ENCODE measurements at regions of chr18 and their contacts with region 1.

Region 1: DNA sequence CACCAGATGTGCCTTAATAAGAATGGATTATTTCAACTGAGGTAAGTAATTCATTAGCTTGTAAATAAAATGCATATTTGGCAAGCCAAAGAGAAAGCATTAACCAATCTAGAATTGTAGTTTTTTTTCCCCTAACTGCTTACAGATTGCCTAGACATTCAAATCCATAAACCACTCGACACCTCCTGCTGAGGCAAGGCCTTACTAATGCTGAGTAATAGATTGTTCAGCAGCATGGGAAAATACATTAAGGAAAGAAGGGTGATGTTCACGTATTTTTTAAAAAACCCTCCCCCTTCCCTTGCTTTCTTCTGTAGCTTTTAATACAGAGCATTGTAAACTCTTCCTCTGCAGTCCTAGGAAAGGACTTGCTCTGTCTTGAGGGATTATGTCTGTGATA is 17.0 kb upstream of the LINC00305 start:
- DNase-seq: no peak
- H3K4me3 ChIP-seq: no peak overlapping the region
- H3K27ac ChIP-seq: no peak overlapping the region
- H3K27me3 ChIP-seq: peaks cover 0 to 5% (median 0%) of the 10 kb centered on the region in 45 donors
- CTCF ChIP-seq: no peak

Region 2: DNA sequence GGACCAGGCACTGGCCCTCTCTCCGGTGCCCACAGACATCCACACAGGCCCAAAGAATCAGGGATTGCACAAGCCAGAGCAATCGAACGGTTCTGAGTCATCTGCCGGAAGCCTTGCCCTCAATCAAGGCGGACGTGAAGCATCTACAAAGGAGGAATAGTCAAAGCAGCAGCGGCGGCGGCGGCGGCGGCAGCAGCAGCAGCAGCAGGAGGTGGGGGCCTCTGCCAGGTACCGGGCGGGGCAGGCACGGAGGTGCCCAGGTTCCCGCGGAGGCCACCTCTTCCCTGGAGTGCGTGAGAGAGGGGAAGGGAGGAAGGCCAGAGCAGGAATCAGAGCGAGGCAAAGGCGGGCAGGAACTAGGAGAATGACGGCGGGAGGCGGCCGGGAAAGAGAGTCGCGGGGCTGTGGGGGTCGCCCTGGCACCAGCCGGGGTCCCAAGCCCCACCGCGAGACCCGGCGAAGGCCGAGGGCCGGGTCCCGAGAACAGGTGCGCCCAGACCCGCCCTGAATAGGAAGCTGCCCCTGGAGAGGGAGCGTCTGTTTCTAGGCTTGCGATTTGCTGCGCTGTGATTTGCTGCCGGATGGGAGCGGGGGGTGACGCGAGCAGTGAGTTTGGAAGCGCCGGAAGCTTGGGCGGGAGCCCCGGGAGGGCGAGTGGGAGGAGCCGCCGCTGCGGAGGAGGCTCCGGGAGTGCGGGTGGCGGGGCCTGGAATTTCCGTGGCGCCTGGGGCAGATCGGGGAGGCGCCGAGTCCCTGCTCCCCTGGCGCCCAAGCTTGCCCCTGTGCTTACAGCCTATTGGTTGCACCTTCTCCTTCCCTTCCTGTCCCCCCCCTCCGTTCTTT is 195.7 kb before region 1 on chr18 and contains the start of gene SERPINB8:
- intact Hi-C with region 1: no loop called
- DNase-seq: peak; percentile 79 to 97 (median 93)
- H3K4me3 ChIP-seq: peak within 1 kb of the TSS; percentile 67 to 98 (median 87)
- H3K27ac ChIP-seq: peak within 1 kb of the TSS; percentile 82 to 99 (median 97)
- H3K27me3 ChIP-seq: no peaks in the 10 kb centered on the region
- CTCF ChIP-seq: peak in 31 of 56 donors; percentile 5 to 53 (median 21)
- total RNA-seq, gene SERPINB8: 1.8 to 12.8 (median 5.7) TPM

Region 3: GRCh38 chr18:64132871-64133270 is 33.0 kb before region 1 on chr18:
- intact Hi-C with region 1: loop called in 1 of 2 experiments (anchors 2 kb)
- DNase-seq: peak in 1 of 10 donors; percentile 36
- H3K4me3 ChIP-seq: no peak overlapping the region
- H3K27ac ChIP-seq: no peak overlapping the region
- H3K27me3 ChIP-seq: peaks cover 0 to 11% (median 0%) of the 10 kb centered on the region in 45 donors
- CTCF ChIP-seq: no peak